Dorsolateral prefrontal cortex (tissue), 120 donors: ENCODE measurements at regions of chr5 and their contacts with region 1.

Region 1: GRCh38 chr5:11903614-11904269 is 504 bp downstream of the CTNND2 start:
- DNase-seq: peak in 6 of 10 donors; percentile 24 to 70 (median 38)
- H3K4me3 ChIP-seq: peak overlapping the region; percentile 54 to 86 (median 77)
- H3K27ac ChIP-seq: peak overlapping the region; percentile 18 to 97 (median 93)
- H3K27me3 ChIP-seq: peaks cover 0 to 5% (median 0%) of the 10 kb centered on the region in 45 donors
- CTCF ChIP-seq: peak in 32 of 56 donors; percentile 4 to 50 (median 21)

Region 2: DNA sequence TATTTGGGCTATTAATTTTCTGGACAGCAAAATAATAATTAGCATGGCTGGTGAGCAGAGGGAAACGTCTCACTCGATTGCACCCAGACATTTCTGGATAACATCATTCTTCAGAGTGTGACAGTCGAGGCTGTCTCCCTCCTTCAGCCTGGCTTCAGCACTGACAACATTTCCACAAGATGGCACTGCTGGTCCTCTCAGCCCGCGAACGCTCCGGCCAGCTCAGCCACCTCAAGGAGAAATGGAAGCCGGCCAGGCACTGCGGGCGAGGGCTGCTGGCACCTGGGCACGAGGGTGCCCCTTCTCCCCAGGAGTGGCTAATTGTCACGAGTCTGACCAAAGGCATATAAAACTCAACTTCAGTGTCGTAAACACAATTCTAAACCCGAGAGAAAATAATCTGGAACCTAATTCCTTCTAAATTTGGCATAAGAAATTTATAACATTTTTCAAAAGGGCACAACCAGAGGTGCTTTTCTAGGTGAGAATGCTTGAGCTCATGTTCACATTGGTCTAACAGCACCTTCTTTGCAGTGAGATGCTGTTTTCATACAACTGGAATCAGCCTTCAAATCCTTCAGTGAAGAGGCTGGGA is 1208.6 kb before region 1 on chr5:
- intact Hi-C with region 1: loop called (anchors 5 to 10 kb)
- DNase-seq: peak; percentile 61 to 85 (median 76)
- H3K4me3 ChIP-seq: peak overlapping the region in 42 of 59 donors; percentile 6 to 56 (median 38)
- H3K27ac ChIP-seq: peak overlapping the region in 5 of 59 donors; percentile 7 to 55 (median 25)
- H3K27me3 ChIP-seq: no peaks in the 10 kb centered on the region
- CTCF ChIP-seq: peak; percentile 58 to 91 (median 81)

Region 3: GRCh38 chr5:11273180-11273903 is 630.4 kb before region 1 on chr5:
- intact Hi-C with region 1: loop called in 1 of 2 experiments (anchors 10 kb)
- DNase-seq: no peak
- H3K4me3 ChIP-seq: peak overlapping the region in 35 of 59 donors; percentile 2 to 46 (median 26)
- H3K27ac ChIP-seq: peak overlapping the region in 53 of 59 donors; percentile 0 to 83 (median 56)
- H3K27me3 ChIP-seq: no peaks in the 10 kb centered on the region
- CTCF ChIP-seq: no peak

Region 4: GRCh38 chr5:11588803-11589202 is 314.9 kb before region 1 on chr5:
- intact Hi-C with region 1: loop called in 1 of 2 experiments (anchors 10 kb)
- DNase-seq: peak; percentile 37 to 75 (median 66)
- H3K4me3 ChIP-seq: peak overlapping the region; percentile 12 to 74 (median 54)
- H3K27ac ChIP-seq: peak overlapping the region in 58 of 59 donors; percentile 33 to 96 (median 91)
- H3K27me3 ChIP-seq: no peaks in the 10 kb centered on the region
- CTCF ChIP-seq: peak in 2 of 56 donors; percentile 12 to 19

Region 5: DNA sequence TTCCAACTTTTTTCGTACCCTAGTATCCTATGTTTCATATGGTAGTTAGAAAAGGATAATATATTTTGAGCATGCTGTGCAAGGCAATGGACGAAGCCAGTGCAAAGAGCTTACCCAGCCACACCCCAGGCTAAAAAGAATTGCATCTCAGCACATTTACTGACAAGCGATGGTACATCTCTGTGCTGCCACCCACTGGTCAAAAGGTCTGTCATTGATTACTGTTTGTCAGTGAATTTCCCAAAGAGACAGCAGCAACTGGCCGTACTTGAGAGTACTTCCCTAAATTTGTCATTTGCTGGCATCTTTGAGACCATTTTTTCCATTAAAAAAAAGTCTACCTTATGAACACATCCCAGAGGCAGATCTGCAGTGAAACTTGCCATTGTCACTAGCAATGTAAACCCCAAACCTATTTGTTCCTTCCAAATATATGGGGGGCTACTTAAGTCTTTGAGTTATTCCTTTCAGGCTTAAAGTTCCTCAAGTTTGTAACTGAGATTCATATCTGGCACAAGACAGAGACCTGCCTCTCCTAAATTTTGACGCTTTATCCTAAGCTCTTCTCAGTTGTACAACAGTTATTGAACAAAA is 183.8 kb before region 1 on chr5:
- intact Hi-C with region 1: loop called in 1 of 2 experiments (anchors 10 kb)
- DNase-seq: peak in 9 of 10 donors; percentile 34 to 91 (median 59)
- H3K4me3 ChIP-seq: no peak overlapping the region
- H3K27ac ChIP-seq: peak overlapping the region in 1 of 59 donors; percentile 9
- H3K27me3 ChIP-seq: no peaks in the 10 kb centered on the region
- CTCF ChIP-seq: peak; percentile 38 to 81 (median 67)

Region 6: GRCh38 chr5:11992518-11992917 is 88.8 kb after region 1 on chr5:
- intact Hi-C with region 1: no loop called
- DNase-seq: no peak
- H3K4me3 ChIP-seq: no peak overlapping the region
- H3K27ac ChIP-seq: no peak overlapping the region
- H3K27me3 ChIP-seq: no peaks in the 10 kb centered on the region
- CTCF ChIP-seq: no peak